Spleen (tissue), 13 donors: ENCODE measurements at regions of chr22 and their contacts with region 1.

Region 1: GRCh38 chr22:20456064-20456721 is 18.6 kb upstream of the SCARF2 start:
- DNase-seq: peak; percentile 92
- H3K4me3 ChIP-seq: no peak overlapping the region
- H3K27ac ChIP-seq: no peak overlapping the region
- H3K4me1 ChIP-seq: peaks cover 8 to 42% (median 17%) of the 10 kb centered on the region in 6 donors
- H3K27me3 ChIP-seq: no peaks in the 10 kb centered on the region
- CTCF ChIP-seq: peak; percentile 86 to 97 (median 93)
- POLR2A ChIP-seq: no peak

Region 2: DNA sequence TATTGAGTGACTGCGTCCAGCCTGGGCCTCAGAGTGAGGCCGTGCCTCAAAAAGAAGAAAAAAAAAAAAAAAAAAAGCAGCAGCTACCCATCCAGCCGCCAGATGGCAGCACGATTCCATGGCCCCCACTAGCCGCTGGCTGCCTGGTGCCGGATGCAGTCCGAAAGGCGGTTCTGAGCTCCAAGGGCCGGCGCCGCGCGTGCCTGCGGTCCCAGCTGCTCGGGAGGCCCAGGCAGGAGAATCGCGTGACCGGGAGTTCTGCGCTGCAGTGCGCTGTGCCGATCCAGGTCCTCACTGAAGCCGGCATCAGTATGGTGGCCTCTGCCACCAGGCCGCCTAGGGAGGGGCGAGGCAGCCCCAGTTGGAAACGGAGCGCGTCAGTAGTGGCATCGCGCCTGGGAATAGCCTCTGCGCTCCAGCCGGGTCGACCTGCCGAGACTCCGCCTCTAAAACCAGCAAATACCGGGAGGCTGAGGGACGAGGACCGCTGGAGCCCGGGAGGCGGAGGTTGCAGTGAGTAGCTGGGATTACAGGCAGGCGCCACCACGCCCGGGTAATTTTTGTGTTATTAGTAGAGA is 37.9 kb before region 1 on chr22:
- intact Hi-C with region 1: loop called (anchors 5 kb)
- DNase-seq: peak; percentile 94
- H3K4me3 ChIP-seq: peak overlapping the region; percentile 11 to 63 (median 32)
- H3K27ac ChIP-seq: peak overlapping the region in 5 of 8 donors; percentile 23 to 61 (median 44)
- H3K4me1 ChIP-seq: peaks cover 3 to 18% (median 9%) of the 10 kb centered on the region in 6 donors
- H3K27me3 ChIP-seq: peaks cover 0 to 8% (median 0%) of the 10 kb centered on the region in 7 donors
- CTCF ChIP-seq: peak; percentile 41 to 99 (median 75)
- POLR2A ChIP-seq: no peak